Mammary epithelial cell (primary cell): ENCODE measurements at regions of chr2 and their contacts with region 1.

Region 1: DNA sequence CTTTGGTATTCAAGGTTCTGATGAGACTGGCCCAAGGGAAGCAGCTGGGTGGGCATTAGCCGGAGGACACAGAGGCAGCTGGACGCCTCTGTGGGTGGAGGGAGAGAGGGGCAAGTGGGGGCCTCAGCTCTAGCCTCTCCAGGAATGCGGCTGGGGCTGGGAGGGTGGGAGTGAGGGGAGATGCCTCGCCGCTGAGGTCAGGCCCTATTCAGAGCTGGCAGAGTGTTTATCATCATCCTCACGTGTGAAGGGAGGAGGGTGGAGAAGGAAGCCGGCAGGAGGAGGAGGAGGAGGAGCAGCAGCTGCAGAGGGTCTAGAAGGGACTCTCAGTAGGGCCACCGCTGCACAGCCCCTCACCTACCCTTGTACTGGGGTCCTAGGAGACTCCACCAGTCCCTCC is 43.1 kb downstream of the TNS1 start:
- DNase-seq: no peak
- H3K4me3 ChIP-seq: no peak overlapping the region
- H3K27ac ChIP-seq: no peak overlapping the region
- H3K4me1 ChIP-seq: no peaks in the 10 kb centered on the region
- H3K27me3 ChIP-seq: peaks cover 3% of the 10 kb centered on the region
- CTCF ChIP-seq: no peak

Region 2: DNA sequence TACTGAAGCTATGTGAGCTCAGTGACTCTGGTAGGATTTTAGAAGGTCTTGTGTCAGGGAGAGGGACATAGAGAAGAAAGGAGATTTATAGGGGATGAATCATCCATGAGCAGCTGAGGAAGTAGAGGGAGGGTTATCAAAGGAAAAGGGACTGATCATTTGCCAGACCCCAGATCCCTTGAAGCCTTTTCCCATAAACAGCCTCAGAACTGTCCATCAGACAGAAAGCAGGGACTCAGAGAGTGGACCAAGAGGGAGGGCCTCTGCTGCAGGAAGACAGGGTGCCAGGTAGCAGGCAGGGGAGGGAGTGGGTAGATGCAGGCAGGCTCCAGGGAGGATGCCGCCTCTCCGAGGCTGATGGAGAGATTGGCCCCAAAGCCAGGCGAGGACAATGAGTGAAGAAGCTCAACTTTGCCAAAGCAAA is 90.8 kb before region 1 on chr2:
- CTCF ChIA-PET with region 1: no interaction called
- dilution Hi-C with region 1: no loop called
- in situ Hi-C with region 1: no loop called
- intact Hi-C with region 1: no loop called
- DNase-seq: no peak
- H3K4me3 ChIP-seq: no peak overlapping the region
- H3K27ac ChIP-seq: no peak overlapping the region
- H3K4me1 ChIP-seq: no peaks in the 10 kb centered on the region
- H3K27me3 ChIP-seq: no peaks in the 10 kb centered on the region
- CTCF ChIP-seq: no peak

Region 3: GRCh38 chr2:217911283-217912097 is 48.2 kb before region 1 on chr2:
- CTCF ChIA-PET with region 1: no interaction called
- dilution Hi-C with region 1: no loop called
- in situ Hi-C with region 1: no loop called
- intact Hi-C with region 1: no loop called
- DNase-seq: no peak
- H3K4me3 ChIP-seq: no peak overlapping the region
- H3K27ac ChIP-seq: no peak overlapping the region
- H3K4me1 ChIP-seq: no peaks in the 10 kb centered on the region
- H3K27me3 ChIP-seq: no peaks in the 10 kb centered on the region
- CTCF ChIP-seq: no peak

Region 4: DNA sequence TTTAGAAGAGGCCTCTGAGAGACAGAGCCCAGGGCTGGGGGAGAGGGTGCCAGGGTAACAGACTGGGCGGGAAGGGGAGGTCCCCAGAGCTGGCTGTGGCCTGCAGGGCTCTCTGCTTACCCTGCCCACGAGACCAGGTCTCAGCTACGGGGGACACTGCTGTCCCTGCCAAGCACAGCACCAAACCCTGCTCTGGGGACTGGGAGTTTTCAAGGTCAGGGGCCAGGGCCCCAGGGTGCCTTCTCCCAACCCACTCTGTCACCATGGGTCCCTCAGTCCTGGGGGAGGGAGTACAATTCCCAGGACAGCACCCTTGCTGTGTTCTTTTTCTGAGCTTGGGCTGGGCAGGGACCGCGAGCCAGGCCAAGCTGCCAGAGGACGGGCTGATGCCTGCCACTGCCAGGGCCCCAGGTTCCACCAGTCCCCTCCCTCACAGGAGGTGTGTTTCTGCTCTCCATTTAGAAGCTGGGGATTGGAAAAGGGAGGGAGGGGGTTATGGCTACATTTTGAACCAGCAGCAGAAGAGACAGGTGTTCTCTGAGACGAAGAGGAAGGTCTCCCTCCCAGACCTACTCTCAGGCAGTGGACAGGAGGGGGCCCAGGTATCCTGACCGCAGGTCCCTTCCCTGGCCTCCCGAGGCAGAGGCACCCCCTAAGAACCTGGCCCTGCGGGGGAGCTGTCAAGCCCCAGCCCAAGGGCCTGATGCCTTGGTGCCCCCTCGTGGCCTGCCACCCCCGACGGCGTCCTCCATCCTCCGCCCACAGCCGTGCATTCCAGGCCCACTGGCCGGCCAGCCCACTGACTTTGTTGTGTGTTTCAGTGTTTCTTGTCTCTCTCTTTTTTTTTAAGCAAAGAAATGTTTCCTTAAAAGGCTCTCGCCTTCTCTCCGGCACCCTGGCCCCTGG is 37.4 kb before region 1 on chr2:
- CTCF ChIA-PET with region 1: no interaction called
- dilution Hi-C with region 1: loop called (anchors 5 kb)
- in situ Hi-C with region 1: no loop called
- intact Hi-C with region 1: no loop called
- DNase-seq: no peak
- H3K4me3 ChIP-seq: no peak overlapping the region
- H3K27ac ChIP-seq: no peak overlapping the region
- H3K4me1 ChIP-seq: no peaks in the 10 kb centered on the region
- H3K27me3 ChIP-seq: no peaks in the 10 kb centered on the region
- CTCF ChIP-seq: peak in 1 of 2 donors; percentile 3

Region 5: GRCh38 chr2:217998926-217999594 is 39.3 kb after region 1 on chr2:
- CTCF ChIA-PET with region 1: no interaction called
- dilution Hi-C with region 1: no loop called
- in situ Hi-C with region 1: no loop called
- intact Hi-C with region 1: loop called (anchors 1 kb)
- DNase-seq: no peak
- H3K4me3 ChIP-seq: no peak overlapping the region
- H3K27ac ChIP-seq: no peak overlapping the region
- H3K4me1 ChIP-seq: peaks cover 19% of the 10 kb centered on the region
- H3K27me3 ChIP-seq: no peaks in the 10 kb centered on the region
- CTCF ChIP-seq: no peak